Naive thymus-derived CD8-positive, alpha-beta T cell (primary cell): ENCODE measurements at regions of chr13 and their contacts with region 1.

Region 1: DNA sequence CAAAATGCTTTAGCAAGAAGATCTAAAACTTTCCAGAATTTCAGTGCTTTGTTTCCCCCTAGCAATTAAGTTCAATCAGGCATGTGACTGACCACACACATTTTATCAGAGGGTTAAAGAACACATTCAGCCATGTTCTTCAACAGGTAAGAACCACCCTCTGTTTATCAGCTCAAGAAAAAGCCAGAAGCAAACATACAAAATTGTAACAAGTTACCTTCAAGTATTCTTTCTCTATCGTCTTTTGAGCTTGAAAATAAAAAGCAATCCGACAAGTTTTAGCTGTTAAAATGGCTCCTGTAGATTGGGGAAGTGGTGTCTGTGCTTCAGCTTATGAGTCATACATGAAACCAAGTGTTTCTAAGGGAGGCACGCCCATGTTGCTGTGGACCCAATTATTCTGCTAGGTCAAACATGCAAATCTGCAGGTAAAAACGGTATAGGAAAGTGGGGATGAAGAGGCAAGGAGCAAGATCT is at the start of gene ELF1:
- DNase-seq: peak in 9 of 10 donors; percentile 47 to 83 (median 64)
- ATAC-seq: peak; percentile 89 to 91
- H3K4me3 Mint-ChIP-seq: peak within 1 kb of the TSS; percentile 80 to 96 (median 92)
- H3K27ac Mint-ChIP-seq: peak within 1 kb of the TSS; percentile 95 to 98 (median 97)
- H3K4me1 Mint-ChIP-seq: peaks cover 20 to 54% (median 47%) of the 10 kb centered on the region in 4 donors
- H3K27me3 Mint-ChIP-seq: no peaks in the 10 kb centered on the region
- polyA plus RNA-seq, gene ELF1: 127 to 155 (median 130) TPM

Region 2: GRCh38 chr13:41004875-41005693 is 14.0 kb before region 1 on chr13:
- POLR2A ChIA-PET with region 1: interaction called, 31 read pairs
- DNase-seq: peak in 4 of 10 donors; percentile 37 to 71 (median 66)
- ATAC-seq: peak; percentile 84 to 94
- H3K4me3 Mint-ChIP-seq: peak overlapping the region; percentile 47 to 77 (median 66)
- H3K27ac Mint-ChIP-seq: peak overlapping the region; percentile 58 to 92 (median 84)
- H3K4me1 Mint-ChIP-seq: peaks cover 29 to 87% (median 66%) of the 10 kb centered on the region in 4 donors
- H3K27me3 Mint-ChIP-seq: no peaks in the 10 kb centered on the region